CD8-positive, alpha-beta T cell (primary cell): ENCODE measurements at regions of chr13 and their contacts with region 1.

Region 1: GRCh38 chr13:25114220-25114619 is 18.3 kb downstream of the PABPC3 start:
- DNase-seq: peak in 8 of 9 experiments; percentile 25 to 58 (median 46)
- ATAC-seq: no peak
- H3K4me3 ChIP-seq: no peak overlapping the region
- H3K4me3 Mint-ChIP-seq: no peak overlapping the region
- H3K27ac ChIP-seq: no peak overlapping the region
- H3K27ac Mint-ChIP-seq: no peak overlapping the region
- H3K4me1 ChIP-seq: peaks cover 4% of the 10 kb centered on the region
- H3K4me1 Mint-ChIP-seq: no peaks in the 10 kb centered on the region
- H3K27me3 ChIP-seq: peaks cover 0 to 4% of the 10 kb centered on the region in 2 experiments
- H3K27me3 Mint-ChIP-seq: peaks cover 26% of the 10 kb centered on the region
- CTCF ChIP-seq: peak; percentile 62

Region 2: DNA sequence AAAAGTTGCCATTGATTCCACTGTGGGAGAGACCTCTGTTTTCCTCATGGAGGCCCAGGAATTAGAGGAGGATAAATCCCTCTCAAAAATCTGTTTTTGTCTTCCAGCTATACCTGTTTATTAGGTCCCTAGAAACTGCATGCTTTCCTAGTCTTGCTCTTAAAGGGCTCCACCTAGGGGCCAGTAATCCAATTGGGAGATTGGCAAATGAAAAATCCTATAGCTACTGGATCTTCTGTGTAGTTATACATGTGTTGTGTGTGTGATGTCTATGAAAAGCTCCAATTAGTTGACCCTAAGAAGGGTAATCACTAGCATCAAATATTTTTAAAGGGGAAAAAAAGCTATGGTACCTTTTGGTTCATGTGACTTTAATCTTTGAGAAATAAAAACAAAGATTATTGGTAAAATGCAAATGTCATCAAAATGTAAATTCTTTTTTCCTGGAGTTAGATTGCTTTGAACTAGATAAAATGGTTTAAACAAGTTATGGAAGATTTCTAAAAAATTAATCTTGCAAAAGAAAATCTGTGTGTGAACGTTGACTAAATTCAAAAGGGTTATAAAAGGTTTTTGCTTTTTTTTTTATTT is 1153.6 kb before region 1 on chr13:
- CTCF ChIA-PET with region 1: no interaction called
- POLR2A ChIA-PET with region 1: no interaction called
- intact Hi-C with region 1: no loop called
- DNase-seq: peak in 2 of 9 experiments; percentile 25 to 38
- ATAC-seq: no peak
- H3K4me3 ChIP-seq: no peak overlapping the region
- H3K4me3 Mint-ChIP-seq: no peak overlapping the region
- H3K27ac ChIP-seq: no peak overlapping the region
- H3K27ac Mint-ChIP-seq: no peak overlapping the region
- H3K4me1 ChIP-seq: no peaks in the 10 kb centered on the region
- H3K4me1 Mint-ChIP-seq: peaks cover 2% of the 10 kb centered on the region
- H3K27me3 ChIP-seq: no peaks in the 10 kb centered on the region
- H3K27me3 Mint-ChIP-seq: no peaks in the 10 kb centered on the region
- CTCF ChIP-seq: peak; percentile 54

Region 3: DNA sequence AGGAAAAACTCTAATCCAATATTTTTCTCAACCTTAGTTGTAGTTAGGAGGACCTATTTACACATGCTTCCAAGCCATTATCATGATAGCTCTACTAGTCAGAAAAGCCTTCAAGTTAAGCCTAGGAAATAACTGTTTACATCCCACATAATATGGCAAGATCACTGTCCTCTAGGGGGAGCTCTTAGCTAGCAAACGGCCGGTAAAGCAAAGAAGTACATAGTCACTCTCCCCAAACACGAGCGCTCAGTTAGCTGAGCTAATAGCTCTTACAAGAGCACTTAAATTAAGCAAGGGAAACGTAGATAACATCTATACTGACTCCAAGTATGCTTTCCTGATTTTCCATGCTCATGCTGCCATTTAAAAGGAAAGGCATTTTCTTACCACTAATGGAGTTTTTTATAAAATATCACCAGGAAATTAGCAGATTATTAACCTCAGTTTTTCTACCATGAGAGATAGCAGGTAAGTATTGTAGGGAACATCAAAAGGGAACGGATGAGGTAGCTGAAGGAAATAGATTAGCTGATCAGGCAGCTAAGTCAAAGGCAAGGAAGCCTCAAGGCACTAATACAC is 118.9 kb before region 1 on chr13:
- CTCF ChIA-PET with region 1: no interaction called
- POLR2A ChIA-PET with region 1: no interaction called
- intact Hi-C with region 1: loop called (anchors 2 to 5 kb)
- DNase-seq: peak in 8 of 9 experiments; percentile 28 to 77 (median 60)
- ATAC-seq: peak; percentile 52
- H3K4me3 ChIP-seq: no peak overlapping the region
- H3K4me3 Mint-ChIP-seq: no peak overlapping the region
- H3K27ac ChIP-seq: no peak overlapping the region
- H3K27ac Mint-ChIP-seq: no peak overlapping the region
- H3K4me1 ChIP-seq: no peaks in the 10 kb centered on the region
- H3K4me1 Mint-ChIP-seq: peaks cover 3% of the 10 kb centered on the region
- H3K27me3 ChIP-seq: peaks cover 0 to 2% of the 10 kb centered on the region in 2 experiments
- H3K27me3 Mint-ChIP-seq: peaks cover 31% of the 10 kb centered on the region
- CTCF ChIP-seq: peak; percentile 80

Region 4: DNA sequence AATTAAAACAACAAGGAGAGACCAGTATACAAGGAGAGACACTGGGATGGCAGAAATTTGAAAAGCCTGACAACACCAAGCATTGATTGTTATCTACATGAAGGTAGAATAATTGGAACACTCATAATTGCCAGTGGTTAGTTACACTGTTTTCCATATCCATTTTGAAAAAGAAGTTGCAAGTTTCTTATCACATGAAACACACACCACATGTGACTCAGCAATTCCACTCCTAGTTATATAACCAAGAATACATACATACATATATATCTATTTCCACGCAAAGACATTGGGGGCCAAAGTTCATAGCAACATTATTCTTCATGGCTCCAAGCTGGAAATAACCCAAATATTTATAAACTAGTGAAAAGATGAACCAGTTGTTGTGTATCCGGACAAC is 33.4 kb before region 1 on chr13:
- CTCF ChIA-PET with region 1: no interaction called
- POLR2A ChIA-PET with region 1: no interaction called
- intact Hi-C with region 1: no loop called
- DNase-seq: no peak
- ATAC-seq: no peak
- H3K4me3 ChIP-seq: no peak overlapping the region
- H3K4me3 Mint-ChIP-seq: no peak overlapping the region
- H3K27ac ChIP-seq: no peak overlapping the region
- H3K27ac Mint-ChIP-seq: no peak overlapping the region
- H3K4me1 ChIP-seq: no peaks in the 10 kb centered on the region
- H3K4me1 Mint-ChIP-seq: no peaks in the 10 kb centered on the region
- H3K27me3 ChIP-seq: no peaks in the 10 kb centered on the region
- H3K27me3 Mint-ChIP-seq: peaks cover 2% of the 10 kb centered on the region
- CTCF ChIP-seq: no peak